ENCODE measurements at regions of chr19 and their contacts with region 1.

Region 1: GRCh38 chr19:41327576-41328156 is 17.7 kb downstream of the CCDC97 start:
- DNase-seq: peak; percentile 93
- ATAC-seq: peak; percentile 75
- H3K4me3 Mint-ChIP-seq: peak overlapping the region; percentile 63
- H3K27ac Mint-ChIP-seq: peak overlapping the region; percentile 96
- H3K4me1 Mint-ChIP-seq: peaks cover 55% of the 10 kb centered on the region
- H3K27me3 Mint-ChIP-seq: no peaks in the 10 kb centered on the region

Region 2: DNA sequence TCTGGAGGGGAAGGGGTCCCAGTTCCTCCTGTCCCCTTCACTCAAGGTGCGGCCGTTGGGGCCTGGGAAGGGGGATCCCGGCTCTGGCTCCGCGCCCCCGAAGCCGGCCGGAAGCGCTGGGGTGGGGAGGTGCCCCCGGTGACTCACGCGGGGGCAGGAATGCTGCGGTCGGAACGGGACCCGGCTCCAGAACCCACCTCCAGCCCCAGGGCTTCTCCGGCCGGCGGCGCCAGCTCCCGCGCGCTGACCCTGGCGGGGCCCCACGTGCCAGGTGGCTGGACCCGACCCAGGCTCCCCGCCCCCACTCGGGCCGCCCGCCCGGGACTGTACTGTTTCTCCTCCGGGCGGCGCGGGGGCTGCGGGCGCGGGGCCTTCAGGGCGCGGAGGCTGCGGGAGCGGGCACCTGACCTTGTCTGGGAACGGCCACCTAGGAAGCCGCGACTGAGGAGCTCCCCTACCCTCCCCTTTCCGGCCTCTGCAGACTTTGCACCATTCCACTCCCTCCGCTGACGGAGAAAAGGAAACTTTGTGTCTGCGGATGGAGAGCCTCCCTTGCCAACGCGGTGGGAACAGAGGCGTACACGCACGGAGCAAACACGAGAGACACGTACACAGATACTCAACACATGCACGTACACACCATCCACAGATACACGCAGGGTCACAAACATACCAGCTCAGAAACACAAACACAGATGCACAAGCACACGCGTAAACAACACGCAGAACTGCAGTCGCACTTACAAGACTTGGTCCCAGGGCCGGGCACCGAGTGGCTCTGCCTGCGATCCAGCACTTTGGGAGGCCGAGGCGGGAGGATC is 101.4 kb before region 1 on chr19:
- CTCF ChIA-PET with region 1: no interaction called
- POLR2A ChIA-PET with region 1: no interaction called
- intact Hi-C with region 1: loop called in 1 of 2 experiments (anchors 2 kb)
- DNase-seq: peak; percentile 70
- ATAC-seq: peak; percentile 45
- H3K4me3 Mint-ChIP-seq: peak overlapping the region; percentile 74
- H3K27ac Mint-ChIP-seq: peak overlapping the region; percentile 91
- H3K4me1 Mint-ChIP-seq: peaks cover 24% of the 10 kb centered on the region
- H3K27me3 Mint-ChIP-seq: peaks cover 6% of the 10 kb centered on the region

Measured in activated CD4-positive, alpha-beta T cell treated with anti-CD3 and anti-CD28 coated beads for 36 hours (primary cell).